Heart right ventricle (tissue), 16 donors: ENCODE measurements at regions of chr15 and their contacts with region 1.

Region 1: GRCh38 chr15:58115692-58116091 is 22.5 kb upstream of the AQP9 start:
- DNase-seq: no peak
- ATAC-seq: peak in 1 of 8 donors; percentile 37
- H3K4me3 ChIP-seq: no peak overlapping the region
- H3K27ac ChIP-seq: no peak overlapping the region
- H3K4me1 ChIP-seq: no peaks in the 10 kb centered on the region
- H3K27me3 ChIP-seq: peaks cover 0 to 14% (median 9%) of the 10 kb centered on the region in 7 donors
- CTCF ChIP-seq: peak in 7 of 9 donors; percentile 13 to 40 (median 35)

Region 2: GRCh38 chr15:58171476-58172057 is 55.9 kb after region 1 on chr15:
- intact Hi-C with region 1: loop called in 1 of 10 experiments (anchors 5 kb)
- DNase-seq: no peak
- ATAC-seq: no peak
- H3K4me3 ChIP-seq: no peak overlapping the region
- H3K27ac ChIP-seq: no peak overlapping the region
- H3K4me1 ChIP-seq: peaks cover 0 to 3% (median 0%) of the 10 kb centered on the region in 9 donors
- H3K27me3 ChIP-seq: peaks cover 0 to 14% (median 3%) of the 10 kb centered on the region in 7 donors
- CTCF ChIP-seq: no peak